Ascending aorta (tissue), 2 donors: ENCODE measurements at regions of chr19 and their contacts with region 1.

Region 1: DNA sequence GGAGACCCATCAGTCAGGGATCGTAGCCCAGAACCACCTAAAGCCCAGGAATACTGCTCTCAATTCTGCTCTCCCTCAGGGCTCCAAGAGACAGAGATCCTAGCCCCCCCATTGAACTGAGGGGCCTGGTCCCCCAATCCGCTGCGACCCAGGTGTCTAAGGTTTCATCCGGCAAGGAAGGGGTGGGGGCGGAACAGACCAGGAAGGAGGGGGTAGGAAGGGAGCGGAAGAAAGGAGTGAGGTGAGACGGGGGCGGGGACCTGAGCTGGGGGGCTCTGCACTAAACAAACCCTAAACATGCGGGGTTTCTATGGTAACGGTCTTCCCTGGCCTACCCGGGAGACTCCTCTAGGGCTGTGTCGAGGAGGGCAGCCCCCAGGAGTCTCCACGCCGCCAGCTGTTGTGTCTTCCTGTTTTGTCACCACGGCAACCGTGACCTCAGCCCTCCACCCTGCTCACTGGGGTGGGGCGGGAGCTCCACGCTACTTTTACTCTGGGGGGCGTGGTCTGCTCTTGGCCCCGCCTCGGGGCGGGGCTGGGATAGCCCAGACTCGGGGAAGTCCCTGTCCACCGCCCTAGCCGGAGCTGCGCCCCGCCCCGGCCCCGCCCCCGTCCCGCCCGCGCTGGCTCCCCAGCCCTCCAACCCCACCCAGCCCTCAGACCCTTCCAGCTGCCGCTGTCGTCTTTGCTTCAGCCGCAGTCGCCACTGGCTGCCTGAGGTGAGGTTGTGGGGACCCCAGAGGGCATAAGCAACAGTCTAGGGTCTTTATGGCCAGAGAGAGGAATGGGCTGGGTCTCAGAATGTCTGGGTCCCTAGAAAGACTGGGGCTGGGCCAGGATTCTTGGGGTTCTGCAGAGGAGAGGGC is at the start of gene MYADM:
- DNase-seq: peak; percentile 99 to 100
- H3K4me3 ChIP-seq: peak within 1 kb of the TSS; percentile 86
- H3K27ac ChIP-seq: peak within 1 kb of the TSS; percentile 98 to 99
- H3K4me1 ChIP-seq: peaks cover 3 to 28% of the 10 kb centered on the region in 2 donors
- H3K27me3 ChIP-seq: no peaks in the 10 kb centered on the region
- CTCF ChIP-seq: no peak
- total RNA-seq, gene MYADM: 422 TPM

Region 2: DNA sequence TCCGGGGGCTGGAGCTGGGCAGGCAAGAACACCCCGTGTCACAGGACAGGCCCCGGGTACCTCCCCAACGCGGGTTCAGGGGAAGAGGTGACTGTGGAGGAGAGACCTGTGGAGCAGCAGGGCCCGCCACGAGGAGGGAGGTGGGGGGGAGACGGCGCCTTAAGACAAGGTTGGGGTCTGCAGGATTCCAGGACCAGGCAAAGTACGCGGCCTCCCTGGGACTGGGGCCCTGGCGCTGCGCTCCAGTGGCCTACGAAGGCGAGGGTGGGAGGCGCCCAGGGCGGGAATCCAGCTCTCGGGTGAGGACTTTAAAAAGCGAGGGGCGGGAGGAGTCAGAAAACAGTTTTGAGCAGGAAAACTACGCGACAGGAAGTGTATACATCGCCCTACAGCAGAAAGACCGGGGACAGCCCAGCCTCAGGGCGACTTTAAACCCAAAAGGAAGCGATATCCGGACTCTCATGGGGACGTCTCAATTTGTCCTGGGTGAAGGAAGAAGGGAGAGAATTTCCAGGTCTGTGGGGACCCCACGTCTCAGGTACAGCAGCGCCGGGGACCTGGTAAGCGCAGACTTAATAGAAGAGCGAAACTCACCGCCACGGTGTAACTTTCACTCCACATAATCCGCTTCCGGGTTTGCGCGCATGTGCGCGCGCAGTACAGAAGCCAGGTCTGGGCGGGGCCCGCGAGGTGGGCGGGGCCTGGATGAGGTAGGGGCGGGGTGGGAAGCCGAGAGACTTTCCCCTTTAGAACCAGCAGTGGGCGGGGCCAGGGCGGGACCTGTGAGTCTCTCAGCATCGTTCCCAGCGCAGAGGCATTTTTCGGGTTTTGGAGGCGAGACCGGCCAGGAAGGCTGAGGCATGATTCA is 1229.5 kb before region 1 on chr19 and contains the start of gene ZNF83:
- intact Hi-C with region 1: loop called (anchors 5 kb)
- DNase-seq: peak; percentile 92 to 99
- H3K4me3 ChIP-seq: peak within 1 kb of the TSS; percentile 62 to 77
- H3K27ac ChIP-seq: peak within 1 kb of the TSS; percentile 87 to 92
- H3K4me1 ChIP-seq: peaks cover 0 to 14% of the 10 kb centered on the region in 2 donors
- H3K27me3 ChIP-seq: no peaks in the 10 kb centered on the region
- CTCF ChIP-seq: no peak
- total RNA-seq, gene ZNF83: 29.1 TPM

Region 3: GRCh38 chr19:53844849-53845246 is 22.6 kb before region 1 on chr19:
- intact Hi-C with region 1: loop called (anchors 2 kb)
- DNase-seq: no peak
- H3K4me3 ChIP-seq: no peak overlapping the region
- H3K27ac ChIP-seq: no peak overlapping the region
- H3K4me1 ChIP-seq: peaks cover 2 to 4% of the 10 kb centered on the region in 2 donors
- H3K27me3 ChIP-seq: no peaks in the 10 kb centered on the region
- CTCF ChIP-seq: no peak

Region 4: DNA sequence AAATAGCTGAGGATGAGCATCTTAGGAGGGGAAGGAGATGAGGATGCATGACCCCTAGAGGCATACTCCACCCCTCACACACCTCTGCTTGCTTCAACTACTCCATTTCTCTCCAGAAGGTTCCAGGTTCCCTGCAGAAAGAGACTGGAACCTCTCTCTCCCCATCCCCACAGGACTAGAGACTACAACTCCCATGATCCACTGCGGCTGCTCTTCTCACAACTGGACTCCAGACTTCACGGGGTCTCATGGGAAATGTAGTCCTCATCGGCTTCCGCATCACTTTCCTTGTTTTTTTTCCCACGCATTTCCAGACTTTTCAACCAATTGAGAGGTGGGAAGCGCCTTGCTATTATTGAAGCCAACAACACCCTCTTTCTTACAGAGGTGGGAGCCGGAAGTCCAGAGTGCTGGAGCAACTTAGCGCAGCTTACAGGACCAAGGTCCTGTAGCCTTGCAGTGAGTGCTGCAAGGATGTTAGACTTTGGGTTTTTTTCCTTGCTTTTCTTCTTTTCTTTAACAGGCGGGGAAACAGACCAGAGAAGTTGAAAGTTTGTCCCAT is 110.1 kb after region 1 on chr19:
- intact Hi-C with region 1: no loop called
- DNase-seq: peak; percentile 32 to 87
- H3K4me3 ChIP-seq: peak overlapping the region; percentile 37 to 57
- H3K27ac ChIP-seq: no peak overlapping the region
- H3K4me1 ChIP-seq: peaks cover 3% of the 10 kb centered on the region in 2 donors
- H3K27me3 ChIP-seq: peaks cover 18% of the 10 kb centered on the region
- CTCF ChIP-seq: no peak

Region 5: DNA sequence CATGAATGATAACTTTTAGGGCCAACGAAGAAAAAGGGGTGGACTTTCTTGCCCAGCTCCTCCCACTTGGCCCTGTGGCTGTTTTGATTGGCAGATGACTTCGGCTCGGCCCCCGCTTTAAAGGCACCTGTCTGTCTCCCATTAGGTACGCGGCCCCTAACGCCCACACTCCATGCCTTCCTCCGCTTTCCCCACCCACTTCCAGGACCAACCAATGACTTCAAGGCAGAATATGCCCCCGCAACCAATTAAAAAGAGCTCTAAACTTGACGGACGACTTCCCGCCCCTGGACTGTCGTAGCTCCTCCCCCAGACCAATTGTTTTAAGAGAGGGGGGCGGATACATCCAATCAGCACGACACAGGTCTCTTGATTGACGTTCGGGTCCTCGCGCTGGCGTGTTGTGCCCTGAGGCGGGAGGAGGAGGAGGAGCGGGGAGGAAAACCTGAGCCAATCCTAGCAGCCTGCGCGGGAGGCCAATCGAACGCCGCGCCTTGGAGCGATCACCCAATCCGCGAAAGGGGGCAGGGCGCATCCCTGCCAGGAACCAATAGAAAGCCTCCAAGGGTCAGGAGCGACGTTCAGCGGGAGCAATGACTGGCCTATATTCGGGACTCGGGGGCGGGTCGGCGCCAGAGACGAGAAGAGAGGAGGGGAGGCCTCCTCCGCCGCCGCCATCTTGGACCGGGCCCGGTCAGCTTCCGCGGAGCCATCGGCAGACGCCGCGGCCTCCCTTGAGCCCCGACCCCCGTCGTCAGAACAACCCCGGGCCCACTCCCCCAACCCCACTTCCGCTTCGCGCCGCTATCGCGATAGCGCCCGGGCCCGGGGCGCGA is 269.8 kb after region 1 on chr19 and contains the start of gene CNOT3:
- intact Hi-C with region 1: loop called (anchors 1 kb)
- DNase-seq: peak; percentile 100
- H3K4me3 ChIP-seq: peak within 1 kb of the TSS; percentile 95 to 98
- H3K27ac ChIP-seq: peak within 1 kb of the TSS; percentile 96 to 98
- H3K4me1 ChIP-seq: peaks cover 0 to 15% of the 10 kb centered on the region in 2 donors
- H3K27me3 ChIP-seq: no peaks in the 10 kb centered on the region
- CTCF ChIP-seq: no peak
- total RNA-seq, gene CNOT3: 69.1 TPM

Region 6: DNA sequence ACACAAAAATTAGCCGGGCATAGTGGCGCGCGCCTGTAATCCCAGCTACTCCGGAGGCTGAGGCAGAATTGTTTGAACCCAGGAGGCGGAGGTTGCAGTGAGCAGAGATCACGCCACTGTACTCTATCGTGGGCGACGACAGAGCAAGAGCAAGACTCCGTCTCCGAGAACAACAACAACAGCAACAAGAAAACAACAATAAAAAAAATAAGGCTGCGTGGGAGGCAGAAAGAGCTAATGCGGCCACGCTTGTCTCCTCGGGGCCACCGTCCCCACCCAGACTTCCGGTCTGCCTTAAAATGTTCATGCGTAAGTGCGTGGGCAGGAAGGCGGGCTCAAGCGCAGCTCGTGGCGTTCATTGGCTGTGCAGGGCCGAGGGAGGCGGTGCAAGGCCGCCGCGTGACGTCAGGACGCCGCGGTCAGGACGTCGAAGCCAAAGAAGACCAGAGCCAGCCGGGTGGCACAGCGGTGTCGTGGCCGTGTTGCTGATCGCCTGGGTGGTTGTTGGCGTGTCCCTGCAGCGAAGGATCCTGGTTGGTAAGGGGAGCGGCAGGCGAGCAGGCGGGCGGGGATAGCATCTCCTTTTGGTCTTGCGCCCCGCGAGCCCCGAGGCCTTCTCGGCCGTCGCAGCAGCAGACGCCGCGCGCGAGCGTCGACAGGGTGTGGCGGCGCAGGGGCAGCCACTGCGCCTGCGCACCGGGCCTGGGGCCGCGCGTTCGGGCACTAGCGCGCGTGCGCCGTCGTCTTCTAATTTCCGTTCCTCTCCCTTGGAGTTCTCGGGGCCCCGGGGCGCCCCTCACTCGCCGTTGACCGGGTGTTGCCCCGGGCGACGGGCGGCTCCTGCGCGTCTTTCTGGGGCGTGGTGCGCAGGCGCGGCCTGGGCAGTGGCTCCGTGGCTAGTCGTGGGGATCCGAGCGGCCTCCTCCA is 581.6 kb after region 1 on chr19 and contains the start of gene LENG8:
- intact Hi-C with region 1: loop called (anchors 5 kb)
- DNase-seq: peak; percentile 92 to 99
- H3K4me3 ChIP-seq: peak within 1 kb of the TSS; percentile 83 to 97
- H3K27ac ChIP-seq: peak within 1 kb of the TSS; percentile 86 to 97
- H3K4me1 ChIP-seq: peaks cover 11 to 39% of the 10 kb centered on the region in 2 donors
- H3K27me3 ChIP-seq: no peaks in the 10 kb centered on the region
- CTCF ChIP-seq: no peak
- total RNA-seq, gene LENG8: 402 TPM

Region 7: DNA sequence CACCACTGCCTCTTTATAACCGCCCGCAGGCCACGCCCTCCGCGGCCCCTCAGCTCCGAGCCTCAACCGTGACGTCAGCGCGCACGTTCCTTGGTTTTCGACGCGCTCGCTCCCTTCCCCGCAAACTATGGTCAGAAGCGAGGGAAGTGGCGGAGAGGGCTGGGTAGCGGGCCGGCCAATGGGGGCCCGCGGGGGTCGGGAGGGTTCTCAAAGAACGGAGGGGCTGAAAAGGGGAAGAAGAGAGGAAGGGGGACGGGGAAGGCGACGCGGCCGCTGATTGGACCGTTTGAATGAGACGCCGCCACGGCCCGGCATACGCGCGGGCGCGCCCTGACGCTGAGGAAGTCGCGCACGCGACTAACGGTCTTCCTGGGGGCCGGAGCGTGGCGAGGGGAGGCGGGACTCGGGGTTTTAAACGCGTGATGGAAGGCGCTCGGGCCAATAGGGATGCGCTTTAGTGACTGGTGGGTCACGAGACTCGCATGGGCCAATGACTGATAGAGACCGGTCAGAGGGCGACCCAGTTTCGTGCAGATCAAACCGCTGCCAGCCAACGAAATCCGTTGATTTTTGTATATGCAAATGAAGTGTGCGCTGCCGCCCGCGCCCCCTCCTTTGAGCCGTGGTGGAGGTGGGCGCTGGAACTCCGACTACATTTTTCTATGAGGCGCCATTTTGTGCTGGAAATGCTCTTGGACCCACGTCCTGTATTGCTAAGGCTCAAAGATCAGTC is 1540.5 kb after region 1 on chr19:
- intact Hi-C with region 1: loop called (anchors 5 kb)
- DNase-seq: peak; percentile 95 to 99
- H3K4me3 ChIP-seq: peak overlapping the region; percentile 86 to 92
- H3K27ac ChIP-seq: peak overlapping the region; percentile 96 to 99
- H3K4me1 ChIP-seq: peaks cover 11 to 13% of the 10 kb centered on the region in 2 donors
- H3K27me3 ChIP-seq: no peaks in the 10 kb centered on the region
- CTCF ChIP-seq: no peak